ENCODE measurements at regions of chr17 and their contacts with region 1.

Region 1: GRCh38 chr17:49694847-49695683 is 12.7 kb downstream of the SLC35B1 start:
- DNase-seq: peak; percentile 84
- H3K4me3 Mint-ChIP-seq: no peak overlapping the region
- H3K27ac Mint-ChIP-seq: peak overlapping the region; percentile 81
- H3K4me1 Mint-ChIP-seq: peaks cover 28% of the 10 kb centered on the region
- H3K27me3 Mint-ChIP-seq: no peaks in the 10 kb centered on the region

Region 2: GRCh38 chr17:49414622-49415350 is 280.3 kb before region 1 on chr17 and contains the start of gene PHB1:
- CTCF ChIA-PET with region 1: no interaction called
- POLR2A ChIA-PET with region 1: no interaction called
- intact Hi-C with region 1: loop called (anchors 5 kb)
- DNase-seq: peak; percentile 98
- H3K4me3 Mint-ChIP-seq: peak within 1 kb of the TSS; percentile 97
- H3K27ac Mint-ChIP-seq: peak within 1 kb of the TSS; percentile 76
- H3K4me1 Mint-ChIP-seq: peaks cover 19% of the 10 kb centered on the region
- H3K27me3 Mint-ChIP-seq: no peaks in the 10 kb centered on the region
- total RNA-seq, gene PHB1: 280 to 295 TPM

Region 3: GRCh38 chr17:49575579-49576087 is 119.4 kb before region 1 on chr17 and contains the start of gene NXPH3:
- CTCF ChIA-PET with region 1: interaction called, 564 read pairs
- POLR2A ChIA-PET with region 1: no interaction called
- intact Hi-C with region 1: loop called (anchors 1 kb)
- DNase-seq: peak; percentile 80
- H3K4me3 Mint-ChIP-seq: peak within 1 kb of the TSS; percentile 63
- H3K27ac Mint-ChIP-seq: no peak within 1 kb of the TSS
- H3K4me1 Mint-ChIP-seq: peaks cover 2% of the 10 kb centered on the region
- H3K27me3 Mint-ChIP-seq: peaks cover 44% of the 10 kb centered on the region
- total RNA-seq, gene NXPH3: 0.10 TPM in 1 of 2 experiments, not detected in the other

Region 4: DNA sequence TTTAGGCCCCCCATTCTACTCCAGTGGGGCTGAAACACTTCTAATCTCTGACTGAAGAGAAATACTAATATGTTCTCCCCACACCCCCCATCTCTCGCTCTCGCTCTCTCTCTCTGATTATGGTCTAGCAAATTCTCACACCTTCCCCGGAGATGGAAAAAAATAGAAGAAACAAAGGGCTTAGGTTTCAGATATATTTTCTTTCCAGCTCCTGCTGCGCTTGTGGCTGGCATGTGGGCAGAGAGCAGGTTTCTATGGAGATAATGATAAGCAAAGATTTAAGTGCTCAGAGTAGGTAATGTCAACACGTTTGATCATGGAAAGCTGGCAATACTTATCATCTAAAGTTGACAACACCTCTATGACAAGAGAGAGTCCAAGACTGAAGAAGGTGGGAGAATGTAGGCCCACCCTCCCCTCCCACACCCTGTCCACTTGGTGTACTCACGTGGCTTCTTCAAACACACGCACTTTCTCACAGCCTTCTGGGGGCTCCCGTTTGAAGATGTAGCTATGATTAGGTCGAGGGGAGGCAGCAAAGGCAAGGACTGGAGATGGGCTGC is 20.7 kb after region 1 on chr17:
- CTCF ChIA-PET with region 1: interaction called, 68 read pairs
- POLR2A ChIA-PET with region 1: interaction called, 7 read pairs
- intact Hi-C with region 1: loop called (anchors 1 kb)
- DNase-seq: peak; percentile 74
- H3K4me3 Mint-ChIP-seq: peak overlapping the region; percentile 27
- H3K27ac Mint-ChIP-seq: peak overlapping the region; percentile 97
- H3K4me1 Mint-ChIP-seq: peaks cover 43% of the 10 kb centered on the region
- H3K27me3 Mint-ChIP-seq: no peaks in the 10 kb centered on the region

Region 5: GRCh38 chr17:49788478-49789242 is 93.6 kb after region 1 on chr17 and contains the start of gene KAT7:
- CTCF ChIA-PET with region 1: interaction called, 10 read pairs
- POLR2A ChIA-PET with region 1: interaction called, 3 read pairs
- intact Hi-C with region 1: loop called (anchors 1 kb)
- DNase-seq: peak; percentile 99
- H3K4me3 Mint-ChIP-seq: peak within 1 kb of the TSS; percentile 91
- H3K27ac Mint-ChIP-seq: peak within 1 kb of the TSS; percentile 95
- H3K4me1 Mint-ChIP-seq: peaks cover 51% of the 10 kb centered on the region
- H3K27me3 Mint-ChIP-seq: no peaks in the 10 kb centered on the region
- total RNA-seq, gene KAT7: 60.5 to 65.8 TPM

Measured in activated CD4-positive, alpha-beta memory T cell treated with anti-CD3 and anti-CD28 coated beads for 36 hours (primary cell).